Sciatic nerve (tissue), 2 donors: ENCODE measurements at regions of chr1 and their contacts with region 1.

Region 1: DNA sequence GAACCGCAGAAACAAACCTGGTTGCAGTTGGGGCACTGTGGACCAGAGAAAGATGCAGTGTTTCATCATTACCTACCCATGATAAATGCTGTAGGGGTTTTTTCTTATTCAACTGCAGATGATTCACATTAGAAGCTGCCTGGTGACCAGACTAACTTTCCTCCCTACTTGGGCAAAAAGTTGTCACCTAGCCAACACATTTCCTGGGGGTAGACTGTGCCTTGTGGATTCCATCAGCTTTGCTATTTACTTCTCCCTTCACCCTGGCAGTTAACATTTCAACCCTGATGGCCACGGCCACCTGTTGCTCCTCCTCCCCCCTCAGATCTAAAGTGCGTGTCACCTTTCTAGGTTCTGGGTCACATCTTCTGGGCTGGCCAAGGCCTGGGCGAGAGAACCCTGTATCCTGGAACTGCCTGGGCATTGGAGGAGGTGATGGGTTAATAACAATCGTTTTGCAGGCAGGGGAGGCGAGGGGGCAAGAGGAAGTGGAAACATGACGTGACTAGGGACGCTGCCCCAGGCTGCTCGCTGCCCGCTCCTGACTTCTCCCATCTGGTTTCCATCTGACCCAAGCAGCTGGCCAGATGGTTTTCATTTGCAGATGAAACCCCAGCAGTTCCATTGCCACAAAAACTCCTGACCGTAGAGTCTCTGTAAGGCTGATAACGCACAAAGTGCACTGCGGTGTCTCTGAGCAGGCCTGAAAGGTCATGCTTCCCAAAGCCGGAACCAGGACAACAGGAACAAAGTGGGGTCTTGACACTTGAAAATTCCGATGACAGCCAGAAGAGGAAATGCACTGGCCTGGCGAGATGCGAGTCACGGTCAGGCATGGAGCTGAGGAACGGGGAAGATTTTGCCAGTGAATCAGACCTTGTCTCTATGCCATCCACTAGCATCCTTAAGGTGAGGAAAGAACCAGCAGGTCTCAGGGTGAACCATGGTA is 36.6 kb downstream of the CAPZB start:
- DNase-seq: peak; percentile 85
- ATAC-seq: peak; percentile 84

Region 2: GRCh38 chr1:19786988-19787423 is 338.2 kb after region 1 on chr1:
- intact Hi-C with region 1: no loop called
- DNase-seq: no peak
- ATAC-seq: no peak

Region 3: GRCh38 chr1:19960618-19961017 is 511.9 kb after region 1 on chr1:
- intact Hi-C with region 1: loop called (anchors 5 kb)
- DNase-seq: no peak
- ATAC-seq: no peak